ENCODE measurements at regions of chr6 and their contacts with region 1.

Region 1: GRCh38 chr6:125956506-125957390 is at the start of gene HINT3:
- DNase-seq: peak; percentile 93
- H3K4me3 ChIP-seq: peak within 1 kb of the TSS; percentile 87 to 94 (median 90)
- H3K27ac ChIP-seq: peak within 1 kb of the TSS; percentile 70
- H3K4me1 ChIP-seq: peaks cover 19% of the 10 kb centered on the region
- H3K27me3 ChIP-seq: no peaks in the 10 kb centered on the region
- CTCF ChIP-seq: peak; percentile 90 to 98
- total RNA-seq, gene HINT3: 13.3 to 23.5 TPM

Region 2: GRCh38 chr6:125779924-125780539 is 176.7 kb before region 1 on chr6:
- CTCF ChIA-PET with region 1: interaction called, 3 read pairs
- dilution Hi-C with region 1: no loop called
- in situ Hi-C with region 1: loop called (anchors 10 kb)
- intact Hi-C with region 1: loop called (anchors 1 kb)
- DNase-seq: peak; percentile 86
- H3K4me3 ChIP-seq: peak overlapping the region; percentile 69 to 98 (median 85)
- H3K27ac ChIP-seq: peak overlapping the region; percentile 95
- H3K4me1 ChIP-seq: peaks cover 4% of the 10 kb centered on the region
- H3K27me3 ChIP-seq: peaks cover 2% of the 10 kb centered on the region
- CTCF ChIP-seq: peak in 1 of 2 donors; percentile 38

Region 3: DNA sequence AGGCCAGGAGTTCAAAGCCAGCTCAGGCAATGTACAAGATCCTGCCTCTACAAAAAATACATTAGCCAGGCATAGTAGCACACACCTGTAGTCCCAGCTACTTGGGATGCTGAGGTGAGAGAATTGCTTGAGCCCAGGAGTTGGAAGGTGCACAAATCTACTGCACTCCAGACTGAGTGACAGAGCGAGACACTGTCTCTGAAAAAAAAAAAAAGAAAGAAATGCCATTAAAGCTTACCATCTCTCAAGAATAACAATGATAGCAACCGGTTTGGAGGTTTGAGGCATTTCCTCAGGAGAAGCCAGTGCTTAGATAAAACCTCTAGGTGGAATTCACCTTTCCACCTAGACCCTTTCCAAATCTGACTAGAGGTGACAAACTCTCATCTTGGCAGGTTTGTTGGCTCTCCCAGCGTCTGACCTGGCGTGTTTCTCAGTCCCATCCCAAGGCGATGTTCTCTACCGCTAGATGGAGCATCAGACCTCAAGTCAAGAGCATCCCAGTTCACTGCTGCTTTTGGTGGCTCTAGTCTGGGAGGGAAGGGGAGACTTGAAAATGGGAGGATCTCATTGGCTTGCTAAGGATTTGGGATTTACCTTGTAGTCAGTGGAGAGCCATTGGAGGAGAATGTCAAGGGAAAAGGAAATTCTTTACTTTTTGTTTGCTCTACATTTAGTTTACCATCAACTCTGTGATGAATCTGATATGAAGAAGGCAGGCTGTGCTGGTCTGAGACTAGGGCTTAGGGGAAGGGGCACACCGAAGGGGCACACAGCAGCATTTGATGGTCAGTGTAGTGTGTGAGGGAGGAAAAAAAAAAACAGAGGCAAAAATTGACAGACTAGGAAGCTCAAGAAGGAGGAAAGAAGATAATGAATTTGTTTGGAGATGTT is 98.1 kb before region 1 on chr6:
- CTCF ChIA-PET with region 1: no interaction called
- dilution Hi-C with region 1: loop called (anchors 5 kb)
- in situ Hi-C with region 1: loop called (anchors 5 to 10 kb)
- intact Hi-C with region 1: loop called (anchors 1 kb)
- DNase-seq: peak; percentile 73
- H3K4me3 ChIP-seq: no peak overlapping the region
- H3K27ac ChIP-seq: no peak overlapping the region
- H3K4me1 ChIP-seq: no peaks in the 10 kb centered on the region
- H3K27me3 ChIP-seq: no peaks in the 10 kb centered on the region
- CTCF ChIP-seq: peak; percentile 91 to 92

Region 4: DNA sequence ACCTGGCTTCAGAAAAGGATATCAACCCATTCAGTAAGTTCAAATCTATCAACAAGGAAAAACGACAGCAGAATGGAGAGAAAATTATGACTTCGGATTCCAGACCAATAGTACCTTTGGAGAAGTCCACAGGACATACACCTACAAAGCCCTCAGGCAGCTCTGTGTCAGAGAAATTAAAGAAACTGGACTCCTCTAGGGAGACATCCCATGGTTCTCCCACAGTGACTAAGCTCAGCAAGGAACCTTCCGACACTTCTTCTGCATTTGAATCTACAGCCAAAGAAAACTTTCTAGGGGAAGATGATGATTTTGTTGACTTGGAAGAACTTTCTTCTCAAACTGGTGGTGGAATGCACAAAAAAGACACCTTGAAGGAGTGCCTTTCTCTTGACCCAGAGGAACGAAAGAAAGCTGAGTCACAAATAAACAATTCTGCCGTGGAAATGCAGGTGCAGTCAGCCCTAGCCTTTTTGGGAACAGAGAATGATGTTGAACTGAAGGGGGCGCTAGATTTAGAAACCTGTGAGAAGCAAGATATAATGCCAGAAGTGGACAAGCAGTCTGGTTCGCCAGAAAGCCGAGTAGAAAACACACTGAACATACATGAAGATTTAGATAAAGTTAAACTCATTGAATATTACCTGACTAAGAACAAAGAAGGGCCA is 67.6 kb before region 1 on chr6:
- CTCF ChIA-PET with region 1: interaction called, 3 read pairs
- dilution Hi-C with region 1: no loop called
- in situ Hi-C with region 1: no loop called
- intact Hi-C with region 1: loop called (anchors 1 kb)
- DNase-seq: peak; percentile 54
- H3K4me3 ChIP-seq: no peak overlapping the region
- H3K27ac ChIP-seq: no peak overlapping the region
- H3K4me1 ChIP-seq: no peaks in the 10 kb centered on the region
- H3K27me3 ChIP-seq: no peaks in the 10 kb centered on the region
- CTCF ChIP-seq: peak; percentile 46 to 60

Region 5: DNA sequence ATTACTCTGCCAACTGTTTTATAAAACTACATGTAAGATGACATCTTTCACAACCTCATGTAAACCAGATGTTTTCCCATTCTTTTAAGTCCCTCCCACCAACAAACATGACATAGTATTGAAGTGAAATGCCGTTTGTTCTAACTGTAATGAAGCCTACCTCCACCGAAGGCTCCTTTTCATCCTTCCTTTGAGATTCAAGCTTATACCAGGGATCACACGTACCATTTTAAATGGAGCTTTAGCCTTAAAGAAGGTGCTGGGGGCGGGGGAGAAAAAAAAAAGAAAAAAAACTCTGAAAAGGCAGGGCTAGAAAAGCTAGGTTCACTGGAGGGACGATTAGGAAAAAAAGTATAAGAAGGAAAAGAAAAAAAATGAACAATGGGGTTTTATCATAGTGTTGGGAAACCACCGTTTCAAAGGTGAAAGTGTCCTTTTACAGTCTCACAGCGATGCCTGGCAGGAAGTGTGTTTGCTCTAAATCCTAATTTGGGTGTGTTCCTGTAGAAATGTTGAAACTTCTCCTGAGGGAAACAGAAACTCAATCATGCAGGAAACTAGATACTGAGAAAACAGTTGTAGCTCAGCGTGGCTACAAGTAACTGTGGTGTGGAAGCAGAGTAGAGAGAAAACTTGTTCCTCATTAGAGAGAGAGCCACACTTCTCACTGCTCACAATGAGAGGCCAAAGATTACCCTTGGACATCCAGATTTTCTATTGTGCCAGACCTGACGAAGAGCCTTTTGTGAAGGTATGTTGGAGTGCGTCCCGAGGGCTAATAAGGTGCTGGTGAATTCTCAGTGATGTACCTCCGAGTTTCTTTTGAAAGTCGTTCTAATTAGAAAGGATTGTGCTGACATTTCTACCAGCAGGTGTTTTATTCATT is 37.8 kb before region 1 on chr6:
- CTCF ChIA-PET with region 1: interaction called, 4 read pairs
- dilution Hi-C with region 1: no loop called
- in situ Hi-C with region 1: no loop called
- intact Hi-C with region 1: loop called (anchors 1 kb)
- DNase-seq: peak; percentile 96
- H3K4me3 ChIP-seq: peak overlapping the region; percentile 37 to 52 (median 51)
- H3K27ac ChIP-seq: peak overlapping the region; percentile 97
- H3K4me1 ChIP-seq: peaks cover 26% of the 10 kb centered on the region
- H3K27me3 ChIP-seq: no peaks in the 10 kb centered on the region
- CTCF ChIP-seq: no peak

Region 6: DNA sequence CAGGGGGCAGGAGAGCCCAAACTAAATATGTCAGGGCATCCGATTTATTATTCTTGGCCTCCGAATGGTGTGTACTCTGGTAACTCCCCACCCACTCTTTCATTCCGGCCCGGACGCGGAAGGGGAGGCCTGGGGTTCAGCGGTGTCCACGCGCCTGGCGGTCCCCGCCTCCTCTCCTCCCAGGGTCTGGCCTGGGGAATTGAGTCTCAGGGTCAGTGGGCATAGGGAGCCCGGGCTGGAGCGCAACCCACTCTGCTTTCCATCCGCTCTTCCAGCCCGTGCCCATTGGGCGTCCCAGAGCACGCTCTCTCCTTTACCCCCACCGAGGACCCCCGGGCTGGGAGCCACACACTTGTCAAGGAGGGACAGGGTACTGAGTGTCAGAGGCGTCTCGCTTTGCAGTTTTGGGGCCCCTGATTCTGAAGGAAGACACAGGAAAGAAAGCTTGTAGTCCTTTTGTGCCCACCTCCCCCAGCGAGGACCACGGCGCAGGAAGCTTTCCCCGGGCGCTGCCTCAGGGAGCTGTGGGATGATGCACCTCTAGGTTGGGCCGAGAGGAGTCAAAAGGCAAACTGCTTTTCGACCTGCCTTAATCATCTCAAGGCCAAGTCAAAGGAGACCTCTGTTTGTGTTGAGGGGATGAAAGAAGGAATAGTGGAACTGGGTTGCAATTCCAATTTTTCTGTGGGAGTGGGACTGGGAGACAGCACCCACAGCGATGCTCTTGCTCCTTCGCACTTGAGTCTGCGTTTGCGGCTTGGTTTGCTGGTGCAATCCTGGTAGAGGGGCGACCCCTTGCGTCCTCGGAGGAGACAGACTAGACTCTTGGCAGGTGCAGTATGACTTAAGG is 1164.3 kb after region 1 on chr6:
- CTCF ChIA-PET with region 1: no interaction called
- dilution Hi-C with region 1: no loop called
- in situ Hi-C with region 1: no loop called
- intact Hi-C with region 1: loop called (anchors 5 kb)
- DNase-seq: peak; percentile 52
- H3K4me3 ChIP-seq: no peak overlapping the region
- H3K27ac ChIP-seq: no peak overlapping the region
- H3K4me1 ChIP-seq: peaks cover 15% of the 10 kb centered on the region
- H3K27me3 ChIP-seq: peaks cover 38% of the 10 kb centered on the region
- CTCF ChIP-seq: peak; percentile 65 to 89